GM12878 (cell line): ENCODE measurements at regions of chr2 and their contacts with region 1.

Region 1: GRCh38 chr2:136135921-136136906 is 18.3 kb upstream of the CXCR4 start:
- DNase-seq: no peak
- ATAC-seq: peak; percentile 64
- H3K4me3 ChIP-seq: no peak overlapping the region
- H3K27ac ChIP-seq: no peak overlapping the region
- H3K4me1 ChIP-seq: peaks cover 42% of the 10 kb centered on the region
- H3K27me3 ChIP-seq: peaks cover 0 to 21% of the 10 kb centered on the region in 2 experiments; a peak in 2 of 4 replicates
- CTCF ChIP-seq: no peak
- EP300 ChIP-seq: peak; percentile 97; a peak in 3 of 4 replicates
- POLR2A ChIP-seq: no peak
- RAD21 ChIP-seq: no peak

Region 2: DNA sequence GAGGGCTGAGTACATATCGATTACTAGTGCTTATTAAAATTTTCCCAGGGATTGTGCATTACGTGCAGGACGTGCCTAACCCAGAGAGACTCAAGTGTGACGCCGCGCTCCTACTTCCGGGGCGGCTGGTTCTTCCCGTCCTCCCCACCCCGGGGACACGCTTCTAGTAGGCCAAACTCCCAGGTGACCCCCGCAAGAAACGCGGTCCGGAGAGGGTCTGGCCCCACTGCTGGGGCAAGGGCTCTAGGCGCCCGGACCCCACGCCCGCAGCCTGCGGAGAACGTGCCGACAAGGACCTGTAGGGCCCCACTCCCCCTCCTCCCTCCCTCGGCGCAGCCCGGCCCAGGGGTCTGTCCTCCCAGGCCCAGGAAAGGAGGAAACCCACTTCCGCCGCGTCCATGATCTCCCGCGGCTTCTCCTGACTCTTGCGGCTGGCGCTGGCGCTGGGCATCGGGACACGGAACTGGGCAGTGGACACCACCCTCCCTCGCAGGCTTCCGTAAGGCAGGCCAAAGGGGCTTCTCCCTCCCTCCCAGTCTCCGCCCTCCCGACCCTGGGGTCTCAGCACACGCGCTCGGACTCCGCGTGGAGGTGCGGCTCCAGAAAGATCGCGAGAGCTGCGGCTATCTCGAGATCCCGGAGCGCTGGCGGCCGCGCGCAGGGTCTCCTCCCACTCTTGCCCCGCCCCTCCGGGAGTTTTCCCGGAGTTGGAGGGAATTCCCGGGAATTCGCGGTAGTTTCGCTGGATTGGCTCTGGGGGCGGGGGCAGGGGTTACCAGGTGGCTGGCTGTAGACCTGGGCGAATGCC is 151.0 kb before region 1 on chr2 and contains the start of gene DARS1:
- CTCF ChIA-PET with region 1: interaction called, 3 read pairs
- POLR2A ChIA-PET with region 1: interaction called, 3 read pairs
- RAD21 ChIA-PET with region 1: interaction called, 4 read pairs
- SMC1A ChIA-PET with region 1: interaction called, 4 read pairs
- in situ Hi-C with region 1: no loop called
- intact Hi-C with region 1: loop called (anchors 5 kb)
- DNase-seq: peak; percentile 79
- ATAC-seq: peak; percentile 86
- H3K4me3 ChIP-seq: peak within 1 kb of the TSS; percentile 88
- H3K27ac ChIP-seq: peak within 1 kb of the TSS; percentile 95
- H3K4me1 ChIP-seq: peaks cover 8% of the 10 kb centered on the region
- H3K27me3 ChIP-seq: no peaks in the 10 kb centered on the region
- CTCF ChIP-seq: no peak
- EP300 ChIP-seq: peak in 1 of 2 experiments; percentile 31; a peak in 2 of 4 replicates
- POLR2A ChIP-seq: peak; percentile 95
- RAD21 ChIP-seq: no peak
- polyA plus RNA-seq, gene DARS1: 102 to 134 TPM

Region 3: GRCh38 chr2:136107051-136108033 is 28.9 kb before region 1 on chr2:
- CTCF ChIA-PET with region 1: interaction called, 3 read pairs
- POLR2A ChIA-PET with region 1: interaction called, 4 read pairs
- RAD21 ChIA-PET with region 1: interaction called, 14 read pairs
- SMC1A ChIA-PET with region 1: interaction called, 20 read pairs
- in situ Hi-C with region 1: no loop called
- intact Hi-C with region 1: no loop called
- DNase-seq: no peak
- ATAC-seq: peak; percentile 68
- H3K4me3 ChIP-seq: no peak overlapping the region
- H3K27ac ChIP-seq: no peak overlapping the region
- H3K4me1 ChIP-seq: peaks cover 15% of the 10 kb centered on the region; the same call in 1 of the 2 replicates
- H3K27me3 ChIP-seq: no peaks in the 10 kb centered on the region
- CTCF ChIP-seq: no peak
- EP300 ChIP-seq: peak in 1 of 2 experiments; percentile 59; a peak in 2 of 4 replicates
- POLR2A ChIP-seq: no peak
- RAD21 ChIP-seq: no peak

Region 4: GRCh38 chr2:136207030-136207623 is 70.9 kb after region 1 on chr2:
- CTCF ChIA-PET with region 1: interaction called, 13 read pairs
- POLR2A ChIA-PET with region 1: interaction called, 53 read pairs
- RAD21 ChIA-PET with region 1: interaction called, 124 read pairs
- SMC1A ChIA-PET with region 1: interaction called, 202 read pairs
- in situ Hi-C with region 1: no loop called
- intact Hi-C with region 1: loop called (anchors 2 kb)
- DNase-seq: peak; percentile 68
- ATAC-seq: peak; percentile 79
- H3K4me3 ChIP-seq: no peak overlapping the region
- H3K27ac ChIP-seq: no peak overlapping the region
- H3K4me1 ChIP-seq: peaks cover 21% of the 10 kb centered on the region
- H3K27me3 ChIP-seq: no peaks in the 10 kb centered on the region; a peak in 1 of 4 replicates
- CTCF ChIP-seq: no peak
- EP300 ChIP-seq: peak; percentile 26 to 55; a peak in 2 of 4 replicates
- POLR2A ChIP-seq: no peak
- RAD21 ChIP-seq: 0 out of 2 replicates have a peak, but pooled peaks have one; percentile 0

Region 5: GRCh38 chr2:136225950-136226835 is 90.0 kb after region 1 on chr2:
- CTCF ChIA-PET with region 1: interaction called, 8 read pairs
- POLR2A ChIA-PET with region 1: no interaction called
- RAD21 ChIA-PET with region 1: interaction called, 11 read pairs
- SMC1A ChIA-PET with region 1: interaction called, 8 read pairs
- in situ Hi-C with region 1: no loop called
- intact Hi-C with region 1: no loop called
- DNase-seq: no peak
- ATAC-seq: peak; percentile 93
- H3K4me3 ChIP-seq: no peak overlapping the region
- H3K27ac ChIP-seq: no peak overlapping the region
- H3K4me1 ChIP-seq: no peaks in the 10 kb centered on the region; the same call in 1 of the 2 replicates
- H3K27me3 ChIP-seq: no peaks in the 10 kb centered on the region
- CTCF ChIP-seq: peak in 1 of 3 experiments; percentile 7; a peak in 1 of 6 replicates
- EP300 ChIP-seq: peak; percentile 96 to 97
- POLR2A ChIP-seq: no peak
- RAD21 ChIP-seq: 0 out of 2 replicates have a peak, but pooled peaks have one; percentile 3

Region 6: DNA sequence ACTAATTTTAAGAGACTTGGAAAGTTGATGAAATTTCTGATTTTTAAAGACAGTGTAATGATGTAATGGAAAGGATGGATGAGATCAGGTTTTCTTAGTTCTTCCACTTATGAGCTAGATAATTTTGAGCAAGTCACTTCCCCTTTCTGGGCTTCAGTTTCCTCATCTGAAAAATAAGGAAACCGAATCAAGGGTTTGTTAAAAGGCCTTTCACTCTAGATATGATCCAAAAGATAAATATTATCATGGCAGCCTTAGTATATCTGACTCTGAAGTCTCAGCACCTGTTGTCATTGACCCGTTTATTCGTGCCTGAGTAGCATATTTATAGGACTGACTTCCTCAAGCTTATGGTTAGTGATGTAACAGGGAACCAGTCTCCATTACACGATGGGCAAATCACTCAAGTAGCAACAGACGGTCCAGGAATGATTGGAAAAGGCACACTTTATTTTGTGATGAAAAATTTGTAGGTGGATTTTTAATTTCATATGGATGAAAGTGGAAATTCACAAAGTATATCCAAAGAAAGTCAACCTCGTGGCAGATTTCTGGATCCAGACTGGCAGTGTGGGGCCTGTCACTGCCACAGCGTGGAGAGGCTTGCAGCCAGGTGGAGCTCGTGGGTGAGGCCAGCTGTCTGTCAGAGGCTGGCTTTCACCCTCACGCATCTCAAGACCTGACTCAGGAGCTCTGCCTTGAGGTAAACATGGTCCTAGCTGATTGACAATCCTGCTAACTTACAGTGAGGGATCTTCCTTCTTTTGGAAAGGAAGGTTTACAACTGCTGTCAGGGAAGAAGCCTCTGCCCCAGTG is 119.6 kb after region 1 on chr2:
- CTCF ChIA-PET with region 1: interaction called, 9 read pairs
- POLR2A ChIA-PET with region 1: interaction called, 5 read pairs
- RAD21 ChIA-PET with region 1: interaction called, 26 read pairs
- SMC1A ChIA-PET with region 1: interaction called, 35 read pairs
- in situ Hi-C with region 1: no loop called
- intact Hi-C with region 1: loop called (anchors 2 kb)
- DNase-seq: no peak
- ATAC-seq: peak; percentile 78
- H3K4me3 ChIP-seq: no peak overlapping the region
- H3K27ac ChIP-seq: no peak overlapping the region
- H3K4me1 ChIP-seq: peaks cover 12% of the 10 kb centered on the region
- H3K27me3 ChIP-seq: no peaks in the 10 kb centered on the region; a peak in 1 of 4 replicates
- CTCF ChIP-seq: peak in 2 of 3 experiments; percentile 9 to 27; a peak in 3 of 6 replicates
- EP300 ChIP-seq: peak in 1 of 2 experiments; percentile 63; a peak in 1 of 4 replicates
- POLR2A ChIP-seq: no peak
- RAD21 ChIP-seq: no peak